ENCODE measurements at regions of chr9 and their contacts with region 1.

Region 1: DNA sequence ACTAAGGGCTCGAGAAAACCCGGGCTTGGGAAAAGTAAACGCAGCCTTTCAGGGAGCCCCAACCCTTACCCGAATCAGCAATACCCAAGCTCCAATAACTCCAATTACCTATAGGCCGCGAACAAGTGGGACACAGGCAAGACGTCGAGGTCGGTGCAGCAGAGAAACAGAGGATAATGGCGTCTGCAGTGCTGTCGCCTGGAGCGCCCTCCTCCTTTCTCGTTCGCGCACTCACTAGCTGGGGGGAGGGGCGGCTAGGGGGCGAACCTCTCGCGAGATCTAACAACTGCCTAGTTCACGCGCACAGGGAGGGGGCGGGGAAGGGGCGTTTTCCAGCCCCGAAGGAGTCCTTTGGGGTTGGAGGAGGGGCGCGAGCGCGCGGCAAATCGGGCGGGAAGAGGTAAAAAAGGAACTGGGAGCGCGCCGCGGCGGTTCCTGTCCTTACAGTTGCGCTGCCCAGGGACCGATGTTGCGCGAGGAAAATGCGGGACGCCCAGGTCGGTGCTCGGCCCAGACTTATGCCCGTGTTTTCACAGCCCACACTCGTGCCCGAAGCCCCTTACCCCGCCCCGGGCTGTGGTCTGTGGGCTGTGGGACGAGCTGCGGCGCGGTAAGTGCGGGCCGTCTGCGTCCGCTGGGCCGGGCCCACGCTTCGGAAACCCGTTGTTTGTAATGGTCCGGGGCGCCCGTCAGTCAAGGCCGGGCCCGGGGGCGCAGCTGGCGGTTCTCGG is at the start of gene RMI1:
- DNase-seq: peak; percentile 100
- H3K4me3 Mint-ChIP-seq: peak within 1 kb of the TSS; percentile 89
- H3K27ac Mint-ChIP-seq: peak within 1 kb of the TSS; percentile 99
- H3K4me1 Mint-ChIP-seq: peaks cover 37% of the 10 kb centered on the region
- H3K27me3 Mint-ChIP-seq: no peaks in the 10 kb centered on the region
- total RNA-seq, gene RMI1: 19.2 to 19.3 TPM

Region 2: DNA sequence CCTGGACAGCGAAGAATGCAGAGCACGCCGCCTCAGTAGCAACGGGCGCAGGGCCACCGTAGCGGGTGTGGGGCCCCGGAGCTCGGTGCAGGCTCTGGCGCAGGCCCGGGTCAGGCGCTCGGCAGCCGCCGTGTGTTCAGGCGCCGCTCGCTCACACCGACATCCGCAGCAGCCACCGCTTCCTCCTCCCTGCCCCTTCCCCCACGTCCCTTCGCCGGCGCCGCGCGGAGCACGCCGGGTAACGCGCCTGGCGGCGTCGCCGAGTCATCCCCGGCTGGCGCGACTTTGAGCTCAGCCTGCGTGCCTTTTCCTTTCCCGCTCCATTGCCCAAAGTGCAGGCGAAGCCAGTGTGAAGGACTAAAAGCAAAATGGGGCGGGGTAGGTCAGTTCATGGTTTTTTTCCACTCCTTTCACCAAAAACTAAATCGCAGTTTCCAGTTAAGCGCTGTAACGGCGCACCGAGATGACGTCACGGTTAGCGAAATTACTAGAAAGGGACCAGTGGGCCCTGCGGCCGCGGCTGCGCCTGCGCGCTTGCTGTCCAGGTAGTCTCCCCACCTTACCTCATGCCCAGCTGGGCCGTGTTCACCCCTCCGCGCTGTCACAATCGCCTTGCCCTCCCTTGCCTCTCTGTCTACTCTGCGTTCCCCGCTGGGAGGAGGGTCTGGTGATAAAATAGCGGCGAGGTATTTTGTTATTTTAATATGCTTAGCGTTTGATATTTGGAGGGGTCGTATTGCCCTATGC is 272.6 kb before region 1 on chr9 and contains the start of gene UBQLN1:
- CTCF ChIA-PET with region 1: no interaction called
- intact Hi-C with region 1: loop called (anchors 1 kb)
- DNase-seq: peak; percentile 95
- H3K4me3 Mint-ChIP-seq: peak within 1 kb of the TSS; percentile 89
- H3K27ac Mint-ChIP-seq: peak within 1 kb of the TSS; percentile 98
- H3K4me1 Mint-ChIP-seq: peaks cover 37% of the 10 kb centered on the region
- H3K27me3 Mint-ChIP-seq: no peaks in the 10 kb centered on the region
- total RNA-seq, gene UBQLN1: 84.8 to 87.1 TPM

Region 3: GRCh38 chr9:83956434-83957247 is 23.9 kb before region 1 on chr9:
- CTCF ChIA-PET with region 1: no interaction called
- intact Hi-C with region 1: loop called (anchors 1 kb)
- DNase-seq: peak; percentile 75
- H3K4me3 Mint-ChIP-seq: peak overlapping the region; percentile 97
- H3K27ac Mint-ChIP-seq: peak overlapping the region; percentile 87
- H3K4me1 Mint-ChIP-seq: peaks cover 15% of the 10 kb centered on the region
- H3K27me3 Mint-ChIP-seq: no peaks in the 10 kb centered on the region

Region 4: GRCh38 chr9:84146893-84147710 is 166.5 kb after region 1 on chr9:
- CTCF ChIA-PET with region 1: no interaction called
- intact Hi-C with region 1: no loop called
- DNase-seq: no peak
- H3K4me3 Mint-ChIP-seq: no peak overlapping the region
- H3K27ac Mint-ChIP-seq: no peak overlapping the region
- H3K4me1 Mint-ChIP-seq: no peaks in the 10 kb centered on the region
- H3K27me3 Mint-ChIP-seq: peaks cover 15% of the 10 kb centered on the region

Region 5: DNA sequence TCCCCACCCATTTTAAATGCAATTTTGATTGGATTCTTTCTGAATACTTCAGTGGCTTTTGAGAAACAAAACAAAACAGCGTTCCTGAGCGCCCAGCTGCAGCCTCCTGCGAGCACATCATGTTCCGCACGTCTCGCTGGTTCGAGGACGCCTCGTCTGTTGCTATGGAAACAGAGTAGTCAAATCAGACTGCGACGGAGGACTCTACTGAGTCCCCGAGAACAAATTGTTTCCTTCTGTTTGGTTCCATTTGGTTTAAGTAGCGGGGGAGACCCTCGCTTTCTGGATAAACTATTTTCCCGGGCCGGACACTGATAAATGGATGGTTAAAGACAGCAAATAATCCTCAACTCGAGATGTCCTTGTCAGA is 291.0 kb after region 1 on chr9:
- CTCF ChIA-PET with region 1: no interaction called
- intact Hi-C with region 1: loop called (anchors 1 kb)
- DNase-seq: peak; percentile 79
- H3K4me3 Mint-ChIP-seq: peak overlapping the region; percentile 75
- H3K27ac Mint-ChIP-seq: peak overlapping the region; percentile 59
- H3K4me1 Mint-ChIP-seq: peaks cover 9% of the 10 kb centered on the region
- H3K27me3 Mint-ChIP-seq: peaks cover 34% of the 10 kb centered on the region

Region 6: DNA sequence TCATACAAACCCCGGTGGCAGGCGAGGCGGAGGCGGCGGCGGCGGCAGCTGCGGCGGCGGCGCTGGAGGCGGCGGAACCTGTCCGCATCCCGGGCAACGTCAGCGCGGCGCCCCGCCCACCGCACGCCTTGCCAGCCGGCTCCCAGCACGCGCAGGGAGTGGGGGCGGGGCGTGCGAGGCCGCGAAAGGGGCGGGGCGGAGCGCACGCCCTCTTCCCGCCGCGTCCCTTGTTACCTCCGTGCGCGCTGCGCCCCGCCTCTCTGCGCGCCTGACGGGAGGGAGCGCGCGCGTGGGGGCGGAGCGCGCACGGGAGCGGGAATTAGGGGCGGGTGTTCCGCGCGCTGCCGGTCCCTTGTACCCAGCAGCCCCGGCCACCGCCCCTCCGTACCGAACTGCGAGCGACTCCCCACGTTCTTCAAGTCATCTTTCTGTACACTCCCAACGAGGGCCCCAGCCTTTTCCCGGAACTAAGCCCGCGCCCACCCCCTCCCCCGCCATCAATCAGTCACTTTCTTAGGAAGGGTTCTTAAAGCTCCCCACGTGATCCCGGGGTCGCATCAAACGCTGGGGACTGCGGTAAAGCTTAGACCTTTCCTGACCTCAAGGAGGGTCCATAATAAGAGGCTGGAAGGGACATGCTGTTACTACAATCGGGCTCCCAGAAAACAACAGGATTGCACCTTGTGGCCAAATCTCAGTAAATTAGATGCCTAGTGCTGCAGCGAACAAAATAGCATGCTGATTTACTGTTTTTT is 1761.5 kb after region 1 on chr9 and contains the start of gene AGTPBP1:
- CTCF ChIA-PET with region 1: no interaction called
- intact Hi-C with region 1: loop called (anchors 1 kb)
- DNase-seq: peak; percentile 95
- H3K4me3 Mint-ChIP-seq: peak within 1 kb of the TSS; percentile 83
- H3K27ac Mint-ChIP-seq: peak within 1 kb of the TSS; percentile 94
- H3K4me1 Mint-ChIP-seq: peaks cover 30% of the 10 kb centered on the region
- H3K27me3 Mint-ChIP-seq: peaks cover 6% of the 10 kb centered on the region
- total RNA-seq, gene AGTPBP1: 37.6 to 39.0 TPM